ENCODE measurements at regions of chr2 and their contacts with region 1.

Region 1: DNA sequence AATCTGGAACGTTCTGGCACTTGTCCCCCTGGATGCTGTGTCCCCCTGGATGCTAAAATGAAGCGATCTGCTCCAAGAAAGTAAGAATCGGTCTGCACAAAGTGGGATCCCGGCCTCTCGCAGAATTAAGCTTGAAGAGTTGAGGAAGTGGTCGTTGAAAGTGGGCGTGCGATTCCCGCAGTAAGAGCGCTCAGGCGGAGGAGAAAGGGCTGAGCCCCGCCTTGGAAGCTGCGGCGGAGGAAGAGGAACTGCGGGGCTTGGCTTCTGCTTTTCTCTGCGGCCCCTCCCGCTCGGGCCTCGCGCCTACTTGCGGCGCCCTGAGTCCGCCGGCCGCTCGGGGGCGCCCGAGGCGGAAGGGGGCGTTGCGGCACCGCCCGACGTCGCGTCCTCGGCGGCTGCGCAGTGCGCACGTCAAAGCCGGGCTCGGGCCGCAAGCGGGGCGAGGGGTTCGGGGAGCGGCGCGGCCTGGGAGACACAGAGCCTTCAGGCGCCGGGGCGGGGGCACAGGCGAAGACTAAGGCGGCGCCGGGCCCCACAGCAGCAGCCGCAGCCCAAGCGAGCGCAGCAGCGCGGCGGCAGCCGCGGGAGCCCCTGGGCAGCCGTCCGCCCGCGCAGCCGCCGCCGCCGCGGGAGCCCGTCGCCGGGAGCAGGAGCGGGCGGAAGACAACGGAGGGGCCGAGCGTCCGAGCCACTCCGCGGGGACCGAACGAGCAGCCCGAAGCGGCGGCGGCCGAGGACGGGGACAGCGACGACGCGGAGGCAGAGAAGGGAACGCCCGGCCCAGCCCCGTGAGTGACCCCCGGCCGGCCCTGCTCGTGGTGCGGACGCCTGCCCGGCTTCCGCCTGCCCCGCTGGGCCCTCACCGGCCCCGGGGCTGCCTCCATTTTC is at the start of gene CAB39:
- DNase-seq: peak; percentile 89
- H3K4me3 Mint-ChIP-seq: peak within 1 kb of the TSS; percentile 99
- H3K27ac Mint-ChIP-seq: peak within 1 kb of the TSS; percentile 98
- H3K4me1 Mint-ChIP-seq: peaks cover 44% of the 10 kb centered on the region
- H3K27me3 Mint-ChIP-seq: no peaks in the 10 kb centered on the region
- total RNA-seq, gene CAB39: 168 and 170 TPM in 2 replicates

Region 2: DNA sequence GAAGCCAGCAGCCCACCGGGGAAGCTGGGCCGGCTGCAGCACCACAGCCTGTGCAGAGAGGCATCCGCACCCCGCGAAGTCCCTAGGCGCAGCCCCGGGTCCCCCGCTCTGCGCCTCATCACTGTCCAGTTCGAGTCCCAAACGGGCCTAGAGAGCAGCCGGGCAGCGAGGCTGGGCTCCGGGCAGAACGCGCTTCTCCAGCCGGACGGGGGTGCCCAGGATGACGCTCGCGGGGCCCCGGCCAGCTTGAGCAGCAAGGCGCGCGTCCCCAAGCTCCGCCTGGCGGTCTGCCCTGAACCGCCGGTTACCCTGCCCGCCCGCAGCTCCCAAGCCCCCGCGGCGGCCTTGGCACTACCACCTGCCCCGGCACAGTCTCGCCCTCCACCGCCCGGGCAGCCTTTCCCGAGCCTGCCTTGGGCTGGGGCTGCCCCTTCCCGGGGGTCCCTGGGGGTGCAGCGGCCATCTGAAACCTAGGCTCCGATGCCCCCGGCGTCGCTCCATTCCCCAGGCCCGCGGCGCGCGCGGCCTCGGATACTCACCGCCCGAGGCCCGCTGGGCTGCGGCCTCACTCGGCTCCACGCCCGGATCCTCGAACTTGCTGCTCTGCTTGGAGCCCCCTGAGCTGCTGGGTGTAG is 644.6 kb before region 1 on chr2:
- intact Hi-C with region 1: loop called (anchors 5 kb)
- DNase-seq: peak; percentile 22
- H3K4me3 Mint-ChIP-seq: peak overlapping the region; percentile 88
- H3K27ac Mint-ChIP-seq: no peak overlapping the region
- H3K4me1 Mint-ChIP-seq: peaks cover 22% of the 10 kb centered on the region
- H3K27me3 Mint-ChIP-seq: peaks cover 21% of the 10 kb centered on the region

Region 3: GRCh38 chr2:230225486-230225885 is 487.2 kb before region 1 on chr2 and contains the start of gene SP140:
- intact Hi-C with region 1: loop called (anchors 1 kb)
- DNase-seq: peak; percentile 80
- H3K4me3 Mint-ChIP-seq: peak within 1 kb of the TSS; percentile 91
- H3K27ac Mint-ChIP-seq: peak within 1 kb of the TSS; percentile 98
- H3K4me1 Mint-ChIP-seq: peaks cover 63% of the 10 kb centered on the region
- H3K27me3 Mint-ChIP-seq: no peaks in the 10 kb centered on the region
- total RNA-seq, gene SP140: 235 and 243 TPM in 2 replicates

Region 4: DNA sequence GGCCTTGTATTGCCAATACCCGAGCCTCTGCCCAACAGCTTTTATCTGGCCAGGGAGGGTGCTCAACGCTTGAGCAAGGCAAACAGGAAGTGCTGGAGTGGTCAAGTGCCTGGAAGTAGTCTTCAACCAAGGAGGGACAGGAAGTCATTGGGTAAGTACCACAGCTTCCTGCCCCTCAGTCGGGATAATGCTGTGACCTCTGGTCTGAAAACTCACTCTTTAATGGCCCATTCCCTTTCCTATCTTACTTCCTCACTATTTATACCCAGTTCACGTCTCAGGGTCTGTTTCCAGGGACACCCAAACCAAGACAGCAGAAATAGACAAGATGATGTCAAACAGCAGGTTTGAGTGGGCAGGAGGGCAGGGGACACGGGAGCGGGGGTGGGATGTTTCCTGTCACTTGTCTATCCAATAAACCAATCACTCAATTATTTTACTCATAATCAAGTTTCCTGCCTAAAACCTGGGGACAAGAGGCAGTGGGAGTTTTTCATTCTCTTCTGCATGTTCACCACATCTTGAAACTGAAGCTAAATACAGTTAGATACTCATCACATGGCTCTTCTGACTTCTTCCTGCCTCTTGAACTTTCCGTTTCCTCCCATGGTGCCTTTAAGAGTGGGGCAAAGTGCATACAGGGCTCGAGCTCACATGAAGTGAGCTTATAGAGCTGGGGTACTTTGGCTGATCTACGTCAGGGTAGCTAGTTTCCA is 69.0 kb before region 1 on chr2:
- intact Hi-C with region 1: loop called (anchors 1 kb)
- DNase-seq: peak; percentile 51
- H3K4me3 Mint-ChIP-seq: peak overlapping the region; percentile 39
- H3K27ac Mint-ChIP-seq: peak overlapping the region; percentile 97
- H3K4me1 Mint-ChIP-seq: peaks cover 29% of the 10 kb centered on the region
- H3K27me3 Mint-ChIP-seq: no peaks in the 10 kb centered on the region

Region 5: GRCh38 chr2:230723363-230723762 is 10.7 kb after region 1 on chr2:
- intact Hi-C with region 1: loop called (anchors 1 kb)
- DNase-seq: peak; percentile 30
- H3K4me3 Mint-ChIP-seq: peak overlapping the region; percentile 77
- H3K27ac Mint-ChIP-seq: peak overlapping the region; percentile 79
- H3K4me1 Mint-ChIP-seq: peaks cover 66% of the 10 kb centered on the region
- H3K27me3 Mint-ChIP-seq: no peaks in the 10 kb centered on the region

Region 6: DNA sequence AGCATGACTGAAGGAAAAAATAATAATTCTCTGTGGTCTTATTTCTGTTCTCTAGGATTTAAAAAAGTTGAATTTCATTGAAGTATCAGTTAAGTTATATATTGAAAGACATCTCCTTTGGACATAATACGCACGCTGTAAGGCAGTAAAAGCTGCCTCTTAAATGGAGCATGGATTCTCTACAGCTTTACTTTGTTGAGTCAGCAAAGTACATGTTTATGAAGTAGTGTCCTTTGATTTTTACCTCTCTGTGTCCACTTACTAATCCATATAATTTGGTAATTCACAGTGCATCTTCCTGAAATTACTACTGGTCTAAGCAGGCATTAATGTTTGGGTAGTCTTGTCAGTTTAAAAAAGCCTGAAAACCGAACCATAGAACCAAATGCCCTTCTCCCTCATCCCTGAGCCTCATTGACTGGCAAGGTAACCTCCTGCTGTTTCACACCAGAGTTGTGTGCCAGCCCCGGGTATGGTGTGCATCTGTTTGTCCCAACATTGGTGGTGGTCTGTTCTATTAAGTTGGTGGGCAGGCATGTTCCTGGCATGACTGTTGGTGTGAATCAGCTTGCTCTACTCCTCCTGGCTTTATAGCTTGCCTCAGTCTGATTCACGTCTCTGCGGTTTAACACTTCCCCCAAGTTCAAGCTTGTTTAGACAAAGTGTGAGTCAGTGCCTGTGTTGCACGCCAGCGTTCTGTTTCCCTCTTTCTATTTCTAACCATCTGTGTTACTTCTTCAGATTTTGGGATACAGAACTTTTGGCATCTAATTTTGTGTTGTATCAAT is 81.1 kb after region 1 on chr2:
- intact Hi-C with region 1: loop called (anchors 1 kb)
- DNase-seq: peak; percentile 73
- H3K4me3 Mint-ChIP-seq: peak overlapping the region; percentile 78
- H3K27ac Mint-ChIP-seq: peak overlapping the region; percentile 97
- H3K4me1 Mint-ChIP-seq: peaks cover 61% of the 10 kb centered on the region
- H3K27me3 Mint-ChIP-seq: peaks cover 2% of the 10 kb centered on the region